IMR-90 (cell line): ENCODE measurements at regions of chr6 and their contacts with region 1.

Region 1: DNA sequence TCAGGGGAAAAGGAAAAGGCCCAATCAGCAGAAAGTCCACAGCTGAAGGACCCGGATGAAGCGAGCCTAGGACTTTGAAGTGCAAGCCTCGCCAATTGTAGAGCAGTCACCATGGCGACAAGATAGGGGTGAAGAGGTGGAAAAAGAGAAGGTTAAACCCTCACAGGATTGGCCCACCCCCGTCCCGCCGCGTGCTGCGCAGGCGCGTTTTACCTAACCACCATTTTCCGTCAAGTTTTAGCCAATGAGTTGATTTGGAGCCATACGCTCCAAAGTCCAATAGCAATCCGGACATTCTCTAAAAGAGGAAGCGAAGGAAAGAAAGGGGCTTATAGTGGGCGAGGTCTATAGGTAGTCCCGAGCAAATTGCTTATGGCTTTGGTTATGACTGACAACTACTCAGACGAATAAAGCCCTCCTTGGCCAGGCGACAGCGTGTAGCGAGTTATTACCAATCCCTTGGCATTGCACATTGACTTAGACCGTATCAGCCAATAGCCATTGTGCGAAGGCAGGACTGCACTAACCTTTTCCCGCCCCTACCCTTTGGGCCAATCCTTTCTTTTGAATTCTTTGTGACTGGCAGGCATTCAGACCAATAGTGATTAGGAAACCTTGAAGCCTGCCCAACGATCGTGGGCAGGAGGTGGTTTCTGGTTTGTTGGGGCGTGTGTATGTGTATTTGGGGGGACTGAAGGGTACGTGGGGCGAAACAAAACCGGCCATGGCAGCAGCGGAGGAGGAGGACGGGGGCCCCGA is at the start of gene RNF5:
- DNase-seq: peak; percentile 100
- ATAC-seq: peak; percentile 78
- H3K4me3 ChIP-seq: peak within 1 kb of the TSS; percentile 65
- H3K27ac ChIP-seq: peak within 1 kb of the TSS; percentile 74
- H3K4me1 ChIP-seq: peaks cover 5% of the 10 kb centered on the region
- H3K27me3 ChIP-seq: no peaks in the 10 kb centered on the region
- CTCF ChIP-seq: no peak
- POLR2A ChIP-seq: peak; percentile 23; the same call in 1 of the 2 replicates
- RAD21 ChIP-seq: no peak
- total RNA-seq, gene RNF5: 18.8 and 28.1 TPM in 2 replicates

Region 2: DNA sequence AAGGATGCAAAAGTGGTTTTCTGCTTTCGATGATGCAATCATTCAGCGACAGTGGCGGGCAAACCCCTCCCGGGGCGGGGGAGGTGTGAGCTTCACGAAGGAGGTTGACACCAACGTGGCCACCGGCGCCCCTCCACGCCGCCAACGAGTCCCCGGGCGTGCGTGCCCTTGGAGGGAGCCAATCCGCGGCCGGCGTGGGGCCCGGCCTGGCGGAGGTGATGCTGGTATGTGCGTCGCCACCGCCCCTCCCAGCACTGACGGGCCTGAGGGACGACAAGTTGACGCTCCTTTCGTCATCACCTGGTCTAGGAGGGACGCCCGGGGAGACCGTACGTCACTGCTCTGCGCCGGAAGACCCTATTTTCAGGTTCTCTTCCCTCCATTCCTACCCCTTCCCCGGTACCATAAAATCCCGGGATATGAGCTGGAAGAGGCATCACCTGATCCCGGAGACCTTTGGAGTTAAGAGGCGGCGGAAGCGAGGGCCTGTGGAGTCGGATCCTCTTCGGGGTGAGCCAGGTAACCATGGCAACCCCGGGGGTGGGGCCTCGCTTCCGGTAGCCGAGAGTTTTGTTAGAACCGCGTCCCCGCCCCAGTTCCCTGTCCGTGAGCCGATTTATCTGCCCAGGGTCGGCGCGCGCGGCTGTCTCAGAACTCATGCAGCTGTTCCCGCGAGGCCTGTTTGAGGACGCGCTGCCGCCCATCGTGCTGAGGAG is 205.8 kb before region 1 on chr6 and contains the start of gene DXO:
- CTCF ChIA-PET with region 1: no interaction called
- POLR2A ChIA-PET with region 1: no interaction called
- dilution Hi-C with region 1: no loop called
- in situ Hi-C with region 1: loop called (anchors 10 kb)
- intact Hi-C with region 1: no loop called
- DNase-seq: peak; percentile 99
- ATAC-seq: peak; percentile 91
- H3K4me3 ChIP-seq: peak within 1 kb of the TSS; percentile 60
- H3K27ac ChIP-seq: peak within 1 kb of the TSS; percentile 93
- H3K4me1 ChIP-seq: peaks cover 11% of the 10 kb centered on the region
- H3K27me3 ChIP-seq: no peaks in the 10 kb centered on the region
- CTCF ChIP-seq: no peak
- POLR2A ChIP-seq: peak; percentile 71
- RAD21 ChIP-seq: 0 out of 2 replicates have a peak, but pooled peaks have one; percentile 1
- total RNA-seq, gene DXO: 7.8 and 9.3 TPM in 2 replicates

Region 3: DNA sequence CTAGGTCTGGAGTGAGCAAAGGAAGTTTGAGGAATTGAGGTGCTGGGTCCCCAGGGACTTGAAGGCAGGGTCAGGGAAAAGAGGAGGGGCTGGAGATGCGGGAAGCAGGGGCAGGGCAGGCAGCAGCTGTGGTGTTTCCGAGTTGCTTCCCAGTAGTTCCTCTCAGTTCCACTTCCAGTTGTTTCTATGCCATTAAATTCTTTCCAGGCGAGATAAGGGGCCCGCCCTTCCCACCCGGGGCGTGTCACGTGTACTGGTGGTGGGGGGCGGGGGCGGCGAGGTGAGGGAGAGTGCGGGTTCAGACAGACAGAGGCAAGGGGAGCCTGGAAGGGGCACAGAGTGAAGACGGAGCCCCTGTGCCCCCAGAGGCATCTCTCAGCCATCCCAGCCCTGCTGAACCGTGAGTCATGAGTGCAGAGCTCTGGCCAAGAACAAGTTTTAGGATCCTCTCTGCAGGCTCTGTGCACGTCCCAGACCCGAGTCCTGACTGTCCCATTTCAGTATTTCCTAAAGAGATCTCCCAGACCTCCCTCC is 69.8 kb before region 1 on chr6:
- CTCF ChIA-PET with region 1: no interaction called
- POLR2A ChIA-PET with region 1: no interaction called
- dilution Hi-C with region 1: no loop called
- in situ Hi-C with region 1: no loop called
- intact Hi-C with region 1: no loop called
- DNase-seq: peak; percentile 21
- ATAC-seq: peak; percentile 84
- H3K4me3 ChIP-seq: no peak overlapping the region
- H3K27ac ChIP-seq: peak overlapping the region; percentile 83
- H3K4me1 ChIP-seq: peaks cover 26% of the 10 kb centered on the region
- H3K27me3 ChIP-seq: peaks cover 29% of the 10 kb centered on the region
- CTCF ChIP-seq: no peak
- POLR2A ChIP-seq: no peak
- RAD21 ChIP-seq: no peak

Region 4: DNA sequence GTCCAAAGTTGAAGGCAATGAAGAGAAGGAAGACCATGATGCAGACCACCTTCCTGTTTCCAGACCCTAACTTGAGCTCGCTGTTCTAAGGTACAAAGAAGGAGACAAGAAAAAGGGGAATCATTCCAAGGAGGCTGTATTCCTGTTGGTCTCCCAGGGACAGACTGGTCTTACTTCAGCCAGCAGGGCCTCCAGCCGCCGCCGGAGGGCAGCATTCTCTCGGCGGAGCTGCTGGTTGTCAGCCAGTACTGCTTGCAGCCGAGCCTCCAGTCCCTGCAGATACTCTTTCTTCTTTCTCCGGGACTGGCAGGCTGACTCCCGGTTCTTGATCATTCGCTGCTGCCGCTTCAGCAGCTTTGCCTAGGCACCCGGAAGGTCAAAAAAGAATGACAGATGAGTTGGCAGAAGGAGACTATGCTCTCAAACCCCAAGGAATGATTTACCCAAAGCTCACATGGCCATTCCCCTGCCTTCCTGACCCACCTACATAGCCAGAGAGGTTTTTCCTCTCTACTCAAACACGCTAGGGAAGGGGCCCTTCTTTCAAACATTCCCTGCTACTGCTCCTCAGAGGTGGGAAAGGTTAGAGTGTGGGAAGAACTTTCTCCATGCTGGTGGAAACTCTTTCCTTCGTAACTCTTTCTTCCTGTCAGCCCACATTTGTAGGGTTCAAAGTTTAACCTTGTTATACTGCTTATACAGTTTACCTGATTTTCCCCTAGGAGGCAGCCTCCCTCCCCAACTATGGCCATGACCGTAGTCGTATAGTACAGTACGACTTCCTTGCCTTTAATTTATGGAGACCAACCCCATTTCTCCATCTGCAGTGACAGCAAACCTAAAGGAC is 59.0 kb before region 1 on chr6:
- CTCF ChIA-PET with region 1: interaction called, 3 read pairs
- POLR2A ChIA-PET with region 1: no interaction called
- dilution Hi-C with region 1: no loop called
- in situ Hi-C with region 1: no loop called
- intact Hi-C with region 1: loop called (anchors 5 kb)
- DNase-seq: peak; percentile 85
- ATAC-seq: peak; percentile 78
- H3K4me3 ChIP-seq: no peak overlapping the region
- H3K27ac ChIP-seq: peak overlapping the region; percentile 36; the same call in 1 of the 2 replicates
- H3K4me1 ChIP-seq: peaks cover 11% of the 10 kb centered on the region
- H3K27me3 ChIP-seq: no peaks in the 10 kb centered on the region
- CTCF ChIP-seq: peak; percentile 98
- POLR2A ChIP-seq: peak; percentile 57; the same call in 1 of the 2 replicates
- RAD21 ChIP-seq: peak; percentile 98

Region 5: DNA sequence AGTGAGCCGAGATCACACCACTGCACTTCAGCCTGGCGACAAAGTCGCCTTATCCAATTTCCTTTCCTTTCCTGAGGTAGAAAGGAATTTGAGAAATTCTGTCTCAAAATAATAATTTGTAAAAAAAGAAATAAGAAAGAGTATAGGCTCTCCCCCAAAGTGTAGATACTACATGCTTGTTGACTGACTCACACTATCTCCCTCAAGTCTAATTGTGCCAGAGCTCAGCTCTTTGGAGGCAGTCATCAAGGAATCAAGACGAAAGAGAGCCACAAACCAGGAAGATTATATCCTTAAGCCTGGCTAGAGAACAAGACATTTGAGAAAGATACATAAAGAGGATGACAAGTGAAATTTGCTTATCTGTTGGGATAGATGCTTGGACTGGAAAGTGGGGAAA is 44.2 kb before region 1 on chr6:
- CTCF ChIA-PET with region 1: no interaction called
- POLR2A ChIA-PET with region 1: no interaction called
- dilution Hi-C with region 1: no loop called
- in situ Hi-C with region 1: no loop called
- intact Hi-C with region 1: loop called (anchors 1 kb)
- DNase-seq: peak; percentile 56
- ATAC-seq: peak; percentile 16
- H3K4me3 ChIP-seq: no peak overlapping the region
- H3K27ac ChIP-seq: no peak overlapping the region
- H3K4me1 ChIP-seq: peaks cover 9% of the 10 kb centered on the region; the same call in 1 of the 2 replicates
- H3K27me3 ChIP-seq: no peaks in the 10 kb centered on the region
- CTCF ChIP-seq: no peak
- POLR2A ChIP-seq: no peak
- RAD21 ChIP-seq: no peak

Region 6: DNA sequence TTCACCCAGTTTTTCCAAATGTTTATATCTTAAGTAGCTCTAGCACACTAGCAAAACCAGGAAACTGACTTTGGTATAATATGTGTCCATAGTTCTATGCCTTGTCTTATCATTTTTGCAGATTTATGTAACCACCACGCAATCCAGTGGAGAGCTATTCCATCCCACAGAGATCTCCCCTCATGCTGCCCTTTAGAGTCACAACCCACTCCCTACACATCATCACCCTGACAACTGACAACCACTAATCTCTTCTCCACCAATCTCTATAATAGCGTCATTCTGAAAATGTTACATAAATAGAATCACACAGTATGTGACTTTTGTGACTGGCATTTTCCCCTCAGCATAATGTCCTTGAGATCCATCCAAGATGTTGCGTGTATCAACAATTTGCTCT is 323.0 kb after region 1 on chr6:
- CTCF ChIA-PET with region 1: no interaction called
- POLR2A ChIA-PET with region 1: no interaction called
- dilution Hi-C with region 1: no loop called
- in situ Hi-C with region 1: no loop called
- intact Hi-C with region 1: no loop called
- DNase-seq: no peak
- ATAC-seq: no peak
- H3K4me3 ChIP-seq: no peak overlapping the region
- H3K27ac ChIP-seq: no peak overlapping the region
- H3K4me1 ChIP-seq: no peaks in the 10 kb centered on the region
- H3K27me3 ChIP-seq: no peaks in the 10 kb centered on the region
- CTCF ChIP-seq: no peak
- POLR2A ChIP-seq: no peak
- RAD21 ChIP-seq: no peak